A549 (cell line): ENCODE measurements at regions of chr17 and their contacts with region 1.

Region 1: GRCh38 chr17:47840740-47841603 is at the start of gene SCRN2:
- DNase-seq: peak; percentile 92 to 93
- ATAC-seq: peak; percentile 79 to 90
- H3K4me3 ChIP-seq: peak within 1 kb of the TSS; percentile 85
- H3K27ac ChIP-seq: peak within 1 kb of the TSS; percentile 90 to 92
- H3K4me1 ChIP-seq: peaks cover 25% of the 10 kb centered on the region
- CTCF ChIP-seq: peak; percentile 98
- EP300 ChIP-seq: no peak
- POLR2A ChIP-seq: peak; percentile 49
- RAD21 ChIP-seq: peak; percentile 99 to 100
- polyA plus RNA-seq, gene SCRN2: 20.7 and 25.8 TPM in 2 replicates

Region 2: GRCh38 chr17:47872021-47872650 is 31.2 kb after region 1 on chr17:
- CTCF ChIA-PET with region 1: interaction called, 224 read pairs
- POLR2A ChIA-PET with region 1: no interaction called
- DNase-seq: no peak
- ATAC-seq: no peak
- H3K4me3 ChIP-seq: no peak overlapping the region
- H3K27ac ChIP-seq: no peak overlapping the region; a peak in 1 of 6 replicates
- H3K4me1 ChIP-seq: 0 out of 3 replicates have a peak, but pooled peaks cover 6% of the 10 kb centered on the region
- CTCF ChIP-seq: no peak
- EP300 ChIP-seq: no peak
- POLR2A ChIP-seq: no peak
- RAD21 ChIP-seq: no peak

Region 3: DNA sequence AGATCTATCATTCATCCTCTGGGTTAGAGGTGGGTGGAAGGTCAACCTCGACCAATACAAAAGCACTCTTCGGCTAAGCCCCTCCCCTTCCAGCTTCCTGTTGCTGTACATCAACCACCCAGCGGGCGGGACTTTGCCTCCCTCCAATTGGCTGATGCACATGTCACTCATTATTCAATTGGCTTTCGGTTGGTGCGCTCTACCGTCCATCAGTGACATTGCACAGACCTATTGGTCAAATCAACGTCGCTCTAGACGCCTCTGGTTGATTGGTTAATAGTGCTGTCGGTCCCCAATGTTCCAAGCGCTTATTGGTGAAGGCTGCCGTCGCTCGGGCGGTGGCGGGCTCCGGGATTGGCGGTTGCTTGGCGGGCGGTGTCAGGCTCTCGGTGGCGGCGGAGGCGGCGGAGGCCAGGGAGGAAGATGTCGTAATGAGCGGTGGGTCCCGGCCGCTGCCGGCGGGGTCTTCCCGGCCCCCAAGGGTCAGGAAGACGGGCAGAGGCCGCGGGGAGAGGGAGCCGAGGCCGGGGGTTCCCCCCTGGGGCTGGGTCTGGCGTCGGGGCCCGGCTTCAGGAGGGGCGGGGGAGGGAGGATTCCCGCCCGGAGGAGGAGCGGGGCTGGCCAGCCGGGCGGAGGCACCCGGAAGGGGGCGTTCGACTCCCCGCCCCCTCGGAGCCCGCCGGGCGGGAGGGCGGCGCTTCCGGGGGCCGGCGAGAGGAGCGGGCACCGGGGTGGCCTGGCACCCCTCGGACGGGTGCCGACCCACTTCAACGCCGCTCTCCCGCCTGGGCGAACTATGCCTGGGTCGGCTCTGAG is 55.1 kb after region 1 on chr17 and contains the start of gene SP2:
- CTCF ChIA-PET with region 1: interaction called, 1,860 read pairs
- POLR2A ChIA-PET with region 1: interaction called, 20 read pairs
- DNase-seq: peak; percentile 100
- ATAC-seq: peak; percentile 88 to 95
- H3K4me3 ChIP-seq: peak within 1 kb of the TSS; percentile 86
- H3K27ac ChIP-seq: peak within 1 kb of the TSS; percentile 95 to 96
- H3K4me1 ChIP-seq: peaks cover 16% of the 10 kb centered on the region; the same call in 2 of the 3 replicates
- CTCF ChIP-seq: no peak
- EP300 ChIP-seq: no peak
- POLR2A ChIP-seq: peak; percentile 91
- RAD21 ChIP-seq: no peak
- polyA plus RNA-seq, gene SP2: 6.2 and 8.0 TPM in 2 replicates

Region 4: GRCh38 chr17:47915776-47916398 is 74.9 kb after region 1 on chr17:
- CTCF ChIA-PET with region 1: interaction called, 10 read pairs
- POLR2A ChIA-PET with region 1: no interaction called
- DNase-seq: no peak
- ATAC-seq: no peak; a peak in 1 of 6 replicates
- H3K4me3 ChIP-seq: no peak overlapping the region
- H3K27ac ChIP-seq: no peak overlapping the region
- H3K4me1 ChIP-seq: 0 out of 3 replicates have a peak, but pooled peaks cover 3% of the 10 kb centered on the region
- CTCF ChIP-seq: no peak
- EP300 ChIP-seq: no peak
- POLR2A ChIP-seq: no peak
- RAD21 ChIP-seq: no peak

Region 5: DNA sequence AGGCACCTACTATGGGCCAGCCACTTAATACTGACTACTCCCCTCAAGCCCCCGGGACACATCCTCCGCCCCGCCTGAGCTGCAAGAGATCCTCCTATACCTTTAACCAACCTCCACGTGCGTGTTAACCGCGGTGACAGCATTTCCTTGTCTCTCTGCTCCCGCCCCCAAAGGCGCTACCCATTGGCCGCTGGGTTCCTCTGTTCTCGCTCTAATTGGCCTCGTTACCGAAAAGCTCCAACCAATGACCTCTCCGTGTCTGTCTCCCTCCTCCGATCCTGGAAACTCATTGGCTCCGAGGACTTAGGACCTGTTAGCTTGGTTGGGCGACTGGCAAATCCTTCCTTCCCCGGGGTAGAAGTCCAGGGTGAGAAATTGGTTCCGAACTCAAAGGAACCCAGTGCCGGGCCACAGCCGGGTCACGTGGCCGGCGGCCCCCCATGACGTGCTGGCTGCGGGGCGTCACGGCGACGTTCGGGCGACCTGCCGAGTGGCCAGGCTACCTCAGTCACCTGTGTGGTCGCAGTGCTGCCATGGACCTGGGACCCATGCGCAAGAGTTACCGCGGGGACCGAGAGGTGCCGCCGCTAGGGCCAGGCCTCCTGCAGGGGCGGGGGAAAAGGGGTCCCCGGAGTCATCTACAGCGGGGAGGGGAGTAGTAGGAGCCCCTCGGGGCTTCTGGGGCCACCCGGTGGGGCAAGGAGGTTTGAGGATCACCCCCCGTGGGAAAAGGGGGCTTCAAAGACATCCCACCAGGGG is 100.4 kb after region 1 on chr17 and contains the start of gene PNPO:
- CTCF ChIA-PET with region 1: interaction called, 86 read pairs
- POLR2A ChIA-PET with region 1: no interaction called
- DNase-seq: peak; percentile 99 to 100
- ATAC-seq: peak; percentile 97 to 100
- H3K4me3 ChIP-seq: peak within 1 kb of the TSS; percentile 71
- H3K27ac ChIP-seq: peak within 1 kb of the TSS; percentile 87 to 93
- H3K4me1 ChIP-seq: peaks cover 29% of the 10 kb centered on the region
- CTCF ChIP-seq: no peak
- EP300 ChIP-seq: no peak
- POLR2A ChIP-seq: peak; percentile 82
- RAD21 ChIP-seq: no peak
- polyA plus RNA-seq, gene PNPO: 40.8 and 43.4 TPM in 2 replicates

Region 6: GRCh38 chr17:47970704-47971463 is 129.9 kb after region 1 on chr17 and contains the start of gene CDK5RAP3:
- CTCF ChIA-PET with region 1: interaction called, 83 read pairs
- POLR2A ChIA-PET with region 1: interaction called, 3 read pairs
- DNase-seq: peak; percentile 96 to 100
- ATAC-seq: peak; percentile 96 to 97
- H3K4me3 ChIP-seq: peak within 1 kb of the TSS; percentile 77
- H3K27ac ChIP-seq: peak within 1 kb of the TSS; percentile 85 to 90
- H3K4me1 ChIP-seq: peaks cover 47% of the 10 kb centered on the region
- CTCF ChIP-seq: peak; percentile 92
- EP300 ChIP-seq: no peak
- POLR2A ChIP-seq: peak; percentile 88
- RAD21 ChIP-seq: peak; percentile 74 to 89
- polyA plus RNA-seq, gene CDK5RAP3: 124 and 179 TPM in 2 replicates

Region 7: GRCh38 chr17:48011405-48012150 is 170.6 kb after region 1 on chr17:
- CTCF ChIA-PET with region 1: interaction called, 225 read pairs
- POLR2A ChIA-PET with region 1: no interaction called
- DNase-seq: peak; percentile 66 to 78
- ATAC-seq: peak; percentile 83 to 87
- H3K4me3 ChIP-seq: no peak overlapping the region
- H3K27ac ChIP-seq: peak overlapping the region; percentile 10 to 34; a peak in 5 of 6 replicates
- H3K4me1 ChIP-seq: 0 out of 3 replicates have a peak, but pooled peaks cover 3% of the 10 kb centered on the region
- CTCF ChIP-seq: peak; percentile 39; the same call in 2 of the 3 replicates
- EP300 ChIP-seq: no peak
- POLR2A ChIP-seq: no peak
- RAD21 ChIP-seq: peak; percentile 23 to 61; a peak in 3 of 5 replicates

Region 8: GRCh38 chr17:48037036-48037837 is 196.3 kb after region 1 on chr17 and contains the start of gene COPZ2:
- CTCF ChIA-PET with region 1: no interaction called
- POLR2A ChIA-PET with region 1: no interaction called
- DNase-seq: peak; percentile 71 to 85
- ATAC-seq: peak; percentile 94 to 95
- H3K4me3 ChIP-seq: peak within 1 kb of the TSS; percentile 63
- H3K27ac ChIP-seq: peak within 1 kb of the TSS; percentile 74 to 91
- H3K4me1 ChIP-seq: 0 out of 3 replicates have a peak, but pooled peaks cover 3% of the 10 kb centered on the region
- CTCF ChIP-seq: peak; percentile 70
- EP300 ChIP-seq: no peak
- POLR2A ChIP-seq: peak; percentile 28
- RAD21 ChIP-seq: 0 out of 5 replicates have a peak, but pooled peaks have one; percentile 17 to 36
- polyA plus RNA-seq, gene COPZ2: 19.1 and 19.3 TPM in 2 replicates